Naive thymus-derived CD8-positive, alpha-beta T cell (primary cell): ENCODE measurements at regions of chr5 and their contacts with region 1.

Region 1: DNA sequence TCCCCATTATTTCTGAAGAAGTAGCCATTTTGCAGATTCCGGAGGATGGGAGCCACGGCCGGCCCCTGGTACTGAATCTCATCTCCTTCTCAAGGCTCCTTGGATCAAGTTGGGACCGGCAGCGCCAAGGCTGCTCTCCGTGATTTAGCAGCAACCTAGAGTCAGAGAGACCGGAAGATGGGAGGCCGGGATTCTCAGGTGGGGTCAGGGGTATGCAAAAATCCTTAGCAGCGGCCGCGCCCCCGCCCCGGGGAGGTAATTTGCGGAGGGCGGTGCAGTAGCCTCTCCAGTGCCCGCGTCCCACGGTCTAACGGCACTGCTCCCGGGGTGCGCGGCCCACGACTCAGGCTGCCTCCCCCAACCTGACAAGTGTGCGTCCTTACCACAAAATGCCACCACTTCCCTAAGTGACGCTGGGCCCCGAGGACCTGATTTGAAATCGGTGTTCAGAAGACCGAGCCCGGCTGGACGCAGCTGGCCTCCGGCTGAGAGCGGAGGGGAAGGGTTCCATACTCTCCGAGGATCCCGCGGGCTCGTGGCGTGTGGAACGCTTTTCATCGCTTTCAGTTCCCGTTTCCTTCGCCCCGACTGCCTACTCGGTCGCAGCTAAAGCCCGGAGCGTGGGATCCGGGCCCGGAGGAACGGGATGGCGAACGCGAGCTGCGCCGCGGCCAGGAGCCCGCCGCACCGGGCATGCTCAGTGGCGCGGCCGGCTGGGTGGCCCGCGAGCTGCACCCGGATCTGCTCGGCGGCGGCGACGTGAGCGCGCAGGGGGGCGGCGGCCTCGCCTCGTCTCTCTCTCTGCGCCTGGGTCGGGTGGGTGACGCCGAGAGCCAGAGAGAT is at the start of gene SCAMP1:
- DNase-seq: peak; percentile 84 to 96 (median 92)
- ATAC-seq: peak; percentile 85 to 89
- H3K4me3 Mint-ChIP-seq: peak within 1 kb of the TSS; percentile 90 to 99 (median 95)
- H3K27ac Mint-ChIP-seq: peak within 1 kb of the TSS; percentile 92 to 98 (median 96)
- H3K4me1 Mint-ChIP-seq: peaks cover 20 to 63% (median 54%) of the 10 kb centered on the region in 4 donors
- H3K27me3 Mint-ChIP-seq: no peaks in the 10 kb centered on the region
- polyA plus RNA-seq, gene SCAMP1: 22.0 to 29.3 (median 26.5) TPM

Region 2: GRCh38 chr5:78294248-78295034 is 65.6 kb before region 1 on chr5 and contains the start of gene AP3B1:
- POLR2A ChIA-PET with region 1: interaction called, 144 read pairs
- DNase-seq: peak; percentile 94 to 99 (median 97)
- ATAC-seq: peak; percentile 86 to 89
- H3K4me3 Mint-ChIP-seq: peak within 1 kb of the TSS; percentile 96 to 100 (median 99)
- H3K27ac Mint-ChIP-seq: peak within 1 kb of the TSS; percentile 89 to 100 (median 98)
- H3K4me1 Mint-ChIP-seq: peaks cover 18 to 52% (median 41%) of the 10 kb centered on the region in 4 donors
- H3K27me3 Mint-ChIP-seq: no peaks in the 10 kb centered on the region
- polyA plus RNA-seq, gene AP3B1: 19.8 to 26.2 (median 23.3) TPM